ENCODE measurements at regions of chr5 and their contacts with region 1.

Region 1: GRCh38 chr5:139765409-139766217 is 30.0 kb upstream of the PSD2 start:
- DNase-seq: peak; percentile 70 to 81 (median 78)
- ATAC-seq: peak; percentile 90
- H3K4me3 ChIP-seq: peak overlapping the region in 1 of 2 donors; percentile 4
- H3K27ac ChIP-seq: no peak overlapping the region
- H3K4me1 ChIP-seq: peaks cover 4% of the 10 kb centered on the region
- H3K27me3 ChIP-seq: peaks cover 0 to 8% of the 10 kb centered on the region in 2 donors
- CTCF ChIP-seq: peak; percentile 91 to 100 (median 96)
- POLR2A ChIP-seq: no peak

Region 2: GRCh38 chr5:139422307-139422893 is 343.2 kb before region 1 on chr5:
- intact Hi-C with region 1: loop called (anchors 10 kb)
- DNase-seq: peak; percentile 49 to 71 (median 52)
- ATAC-seq: peak; percentile 90
- H3K4me3 ChIP-seq: no peak overlapping the region
- H3K27ac ChIP-seq: no peak overlapping the region
- H3K4me1 ChIP-seq: no peaks in the 10 kb centered on the region
- H3K27me3 ChIP-seq: no peaks in the 10 kb centered on the region
- CTCF ChIP-seq: peak; percentile 35 to 85 (median 83)
- POLR2A ChIP-seq: no peak

Region 3: DNA sequence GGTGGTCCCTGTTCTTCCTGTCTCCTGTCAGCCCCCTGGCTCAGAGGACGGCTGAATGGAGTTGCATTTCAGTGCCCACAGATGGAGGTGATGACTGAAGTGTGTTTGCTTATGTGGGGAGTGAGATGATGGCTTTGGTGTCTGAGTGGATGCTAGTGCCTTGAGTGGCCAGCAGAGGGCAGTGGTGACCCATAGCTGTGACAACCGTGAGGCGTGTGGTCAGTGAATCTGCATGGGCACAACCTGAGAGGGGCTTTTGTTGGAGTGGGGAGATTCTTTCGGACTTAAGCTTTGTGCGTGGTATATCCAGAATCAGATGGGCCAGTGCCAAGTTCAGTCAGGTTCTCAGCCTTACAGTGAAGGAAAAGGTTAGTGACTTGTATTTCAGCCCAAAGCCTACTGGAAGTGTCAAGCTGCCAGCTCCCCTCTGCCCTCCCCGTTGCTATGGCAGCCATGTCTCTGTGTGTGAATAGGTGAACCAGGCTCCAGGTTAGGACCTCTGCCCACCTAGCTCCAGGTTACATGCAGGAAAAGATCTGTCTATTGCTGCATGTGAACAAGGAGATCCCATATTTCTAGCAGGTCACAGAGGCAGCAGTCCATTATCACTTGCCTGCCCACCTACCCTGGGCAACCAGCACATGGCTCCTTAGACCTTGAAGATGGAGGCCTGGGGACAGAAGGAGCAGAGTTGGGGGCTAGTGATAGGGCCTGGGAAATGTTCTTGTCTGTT is 132.2 kb before region 1 on chr5:
- intact Hi-C with region 1: loop called (anchors 5 kb)
- DNase-seq: peak; percentile 74 to 77 (median 76)
- ATAC-seq: no peak
- H3K4me3 ChIP-seq: no peak overlapping the region
- H3K27ac ChIP-seq: no peak overlapping the region
- H3K4me1 ChIP-seq: peaks cover 34% of the 10 kb centered on the region
- H3K27me3 ChIP-seq: no peaks in the 10 kb centered on the region
- CTCF ChIP-seq: peak; percentile 89 to 99 (median 96)
- POLR2A ChIP-seq: no peak

Region 4: DNA sequence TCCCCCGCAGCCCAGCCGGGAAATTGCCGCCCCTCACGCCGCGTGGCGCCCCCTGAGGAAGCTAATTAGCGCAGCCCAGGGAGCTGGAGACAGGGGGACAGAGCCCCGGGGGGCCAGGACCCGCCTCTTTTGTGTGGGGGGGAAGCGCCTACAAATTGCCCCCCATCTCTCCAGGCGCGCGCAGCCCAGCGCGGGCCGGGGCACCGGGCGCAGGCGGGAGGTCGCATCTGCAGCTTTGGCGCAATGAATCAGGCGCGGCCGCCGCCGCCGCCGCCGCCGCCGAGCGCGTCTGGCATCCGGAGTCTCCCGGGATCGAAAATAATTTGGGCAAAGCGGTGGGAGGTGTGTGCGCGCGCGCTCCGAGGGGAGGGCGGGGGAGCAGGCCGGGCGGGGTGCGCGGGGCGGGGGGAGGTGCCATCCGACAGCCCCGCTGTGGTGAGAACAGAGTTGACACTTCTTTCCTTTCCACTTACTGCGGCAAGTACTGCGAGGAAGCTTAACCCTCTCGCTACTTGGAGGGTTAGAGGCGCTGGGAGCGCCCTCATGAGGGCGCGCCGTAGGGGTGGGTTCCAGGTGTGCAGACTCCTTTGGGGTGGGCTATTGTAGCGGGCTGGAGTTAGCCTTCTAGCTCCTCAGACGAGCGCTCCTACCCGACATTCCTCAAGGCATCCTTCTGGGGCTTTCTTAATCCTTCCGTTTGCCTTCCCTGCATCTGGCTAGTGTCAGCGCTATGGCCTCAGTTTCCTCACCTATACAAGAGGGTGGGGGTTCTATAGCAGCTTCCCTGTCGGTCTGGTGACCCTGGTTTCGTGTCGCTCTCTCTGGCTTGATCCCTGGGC is 54.3 kb before region 1 on chr5:
- intact Hi-C with region 1: loop called (anchors 5 kb)
- DNase-seq: peak in 3 of 4 donors; percentile 40 to 51 (median 43)
- ATAC-seq: peak; percentile 31
- H3K4me3 ChIP-seq: no peak overlapping the region
- H3K27ac ChIP-seq: peak overlapping the region in 2 of 4 donors; percentile 10 to 42
- H3K4me1 ChIP-seq: peaks cover 37% of the 10 kb centered on the region
- H3K27me3 ChIP-seq: no peaks in the 10 kb centered on the region
- CTCF ChIP-seq: peak in 1 of 7 experiments; percentile 2
- POLR2A ChIP-seq: no peak

Measured in body of pancreas (tissue), 4 donors.